CD4-positive, alpha-beta memory T cell (primary cell): ENCODE measurements at regions of chr17 and their contacts with region 1.

Region 1: DNA sequence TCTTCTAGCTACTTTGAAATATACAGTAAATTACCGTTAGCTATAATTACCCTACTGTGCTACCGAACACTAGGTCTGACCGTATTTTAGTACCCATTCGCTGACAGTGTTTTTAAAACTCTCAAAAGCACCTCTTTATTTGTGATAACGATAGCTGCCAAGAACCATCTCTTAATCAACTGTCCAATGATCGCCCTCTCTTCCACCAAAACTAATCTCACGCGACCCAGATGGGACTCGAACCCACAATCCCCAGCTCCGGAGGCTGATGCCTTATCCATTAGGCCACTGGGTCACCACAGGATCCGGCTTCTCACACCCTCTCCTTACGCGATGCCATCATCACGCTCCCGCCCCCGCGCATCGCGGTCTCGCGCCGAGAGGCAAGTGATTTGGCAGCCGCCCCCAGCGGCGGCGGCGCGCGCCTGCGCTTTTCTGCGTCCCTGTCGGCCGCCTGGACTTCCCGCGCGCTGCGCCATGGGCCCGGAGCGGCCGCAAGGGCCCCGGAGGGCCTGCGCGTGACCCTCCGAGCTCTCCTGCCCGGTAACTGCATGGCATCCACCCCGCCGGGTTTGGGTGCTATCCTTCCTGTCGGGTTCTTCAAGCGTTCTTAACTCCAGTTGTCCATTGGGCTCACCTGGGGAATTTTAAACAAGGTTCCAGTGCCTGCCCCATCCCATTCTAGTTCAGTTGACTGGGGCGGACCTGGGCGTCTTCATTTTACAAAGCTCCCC is 15.7 kb upstream of the KPNA2 start:
- DNase-seq: peak; percentile 93 to 98 (median 95)
- H3K4me3 ChIP-seq: peak overlapping the region; percentile 54 to 65
- H3K4me3 Mint-ChIP-seq: peak overlapping the region; percentile 84 to 94 (median 90)
- H3K27ac ChIP-seq: peak overlapping the region; percentile 62
- H3K27ac Mint-ChIP-seq: peak overlapping the region; percentile 91 to 100 (median 98)
- H3K4me1 ChIP-seq: peaks cover 15% of the 10 kb centered on the region
- H3K4me1 Mint-ChIP-seq: peaks cover 8 to 26% (median 21%) of the 10 kb centered on the region in 4 donors
- H3K27me3 ChIP-seq: no peaks in the 10 kb centered on the region
- H3K27me3 Mint-ChIP-seq: peaks cover 0 to 4% of the 10 kb centered on the region in 2 donors

Region 2: GRCh38 chr17:67824735-67825626 is 194.9 kb before region 1 on chr17 and contains the start of gene BPTF:
- CTCF ChIA-PET with region 1: no interaction called
- POLR2A ChIA-PET with region 1: no interaction called
- intact Hi-C with region 1: no loop called
- DNase-seq: peak; percentile 89 to 90 (median 90)
- H3K4me3 ChIP-seq: peak within 1 kb of the TSS; percentile 52 to 75
- H3K4me3 Mint-ChIP-seq: peak within 1 kb of the TSS; percentile 91 to 100 (median 95)
- H3K27ac ChIP-seq: peak within 1 kb of the TSS; percentile 46
- H3K27ac Mint-ChIP-seq: peak within 1 kb of the TSS; percentile 96 to 99 (median 98)
- H3K4me1 ChIP-seq: peaks cover 38% of the 10 kb centered on the region
- H3K4me1 Mint-ChIP-seq: peaks cover 18 to 45% (median 30%) of the 10 kb centered on the region in 4 donors
- H3K27me3 ChIP-seq: no peaks in the 10 kb centered on the region
- H3K27me3 Mint-ChIP-seq: peaks cover 0 to 3% of the 10 kb centered on the region in 2 donors
- total RNA-seq, gene BPTF: 182 to 187 TPM

Region 3: DNA sequence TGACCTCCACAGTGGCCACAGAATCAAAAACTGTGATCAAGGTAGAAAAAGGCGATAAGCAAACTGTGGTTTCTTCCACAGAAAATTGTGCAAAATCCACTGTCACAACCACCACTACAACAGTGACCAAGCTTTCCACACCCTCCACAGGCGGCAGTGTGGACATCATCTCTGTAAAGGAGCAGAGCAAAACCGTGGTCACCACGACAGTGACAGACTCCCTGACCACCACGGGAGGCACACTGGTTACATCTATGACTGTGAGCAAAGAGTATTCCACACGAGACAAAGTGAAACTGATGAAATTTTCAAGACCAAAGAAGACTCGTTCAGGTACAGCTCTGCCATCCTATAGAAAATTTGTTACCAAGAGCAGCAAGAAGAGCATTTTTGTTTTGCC is 107.2 kb before region 1 on chr17:
- CTCF ChIA-PET with region 1: no interaction called
- POLR2A ChIA-PET with region 1: no interaction called
- intact Hi-C with region 1: no loop called
- DNase-seq: no peak
- H3K4me3 ChIP-seq: no peak overlapping the region
- H3K4me3 Mint-ChIP-seq: no peak overlapping the region
- H3K27ac ChIP-seq: no peak overlapping the region
- H3K27ac Mint-ChIP-seq: peak overlapping the region in 3 of 7 donors; percentile 48 to 82 (median 57)
- H3K4me1 ChIP-seq: no peaks in the 10 kb centered on the region
- H3K4me1 Mint-ChIP-seq: peaks cover 13 to 32% (median 22%) of the 10 kb centered on the region in 4 donors
- H3K27me3 ChIP-seq: no peaks in the 10 kb centered on the region
- H3K27me3 Mint-ChIP-seq: no peaks in the 10 kb centered on the region

Region 4: DNA sequence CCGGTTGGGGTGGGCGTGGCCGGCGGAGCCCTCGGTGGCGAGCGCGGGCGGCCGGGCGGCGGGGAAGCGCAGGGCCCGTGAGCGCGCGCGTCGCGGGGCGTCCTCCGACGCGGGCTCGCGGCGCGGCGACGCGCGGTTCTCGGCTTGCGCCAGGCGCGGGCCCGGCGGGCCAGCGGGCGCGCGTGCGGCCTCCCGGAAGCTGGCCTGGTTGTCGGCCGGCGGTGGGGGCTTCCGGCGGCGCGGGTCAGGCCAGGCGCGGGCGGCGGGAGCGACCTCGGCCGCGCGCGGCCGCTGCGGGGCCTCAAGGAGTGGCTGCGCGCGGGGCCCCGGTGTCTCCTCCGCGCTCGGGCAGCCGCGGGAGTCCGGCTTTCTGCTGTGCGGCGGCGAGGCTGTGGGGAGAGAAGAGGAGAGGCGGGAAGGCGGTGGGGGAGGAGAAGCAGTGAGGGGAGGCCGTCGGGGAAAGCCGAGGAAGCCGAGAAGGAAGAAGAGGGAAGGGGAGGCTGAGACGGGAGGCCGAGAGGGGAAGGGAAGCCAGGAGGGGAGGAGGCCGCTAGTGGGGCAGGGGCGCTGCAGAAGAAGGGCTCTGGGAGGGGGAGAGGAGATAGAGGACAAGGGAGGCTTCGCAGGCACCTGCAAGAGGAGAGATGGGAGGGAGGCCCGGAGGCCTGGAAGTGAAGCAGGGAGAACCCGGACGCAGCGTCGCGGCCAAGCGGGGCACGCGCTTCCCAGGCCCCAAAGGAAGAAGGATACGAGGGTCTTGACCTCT is 26.1 kb before region 1 on chr17:
- CTCF ChIA-PET with region 1: interaction called, 4 read pairs
- POLR2A ChIA-PET with region 1: interaction called, 8 read pairs
- intact Hi-C with region 1: loop called (anchors 2 kb)
- DNase-seq: peak in 4 of 5 donors; percentile 10 to 74 (median 58)
- H3K4me3 ChIP-seq: peak overlapping the region in 1 of 2 donors; percentile 52
- H3K4me3 Mint-ChIP-seq: peak overlapping the region; percentile 78 to 94 (median 88)
- H3K27ac ChIP-seq: no peak overlapping the region
- H3K27ac Mint-ChIP-seq: peak overlapping the region in 6 of 7 donors; percentile 12 to 84 (median 64)
- H3K4me1 ChIP-seq: peaks cover 34% of the 10 kb centered on the region
- H3K4me1 Mint-ChIP-seq: peaks cover 19 to 39% (median 26%) of the 10 kb centered on the region in 4 donors
- H3K27me3 ChIP-seq: peaks cover 13% of the 10 kb centered on the region
- H3K27me3 Mint-ChIP-seq: peaks cover 9 to 12% of the 10 kb centered on the region in 2 donors

Region 5: GRCh38 chr17:68035523-68036303 is 15.9 kb after region 1 on chr17 and contains the start of gene KPNA2:
- CTCF ChIA-PET with region 1: interaction called, 6 read pairs
- POLR2A ChIA-PET with region 1: interaction called, 20 read pairs
- intact Hi-C with region 1: loop called (anchors 1 kb)
- DNase-seq: peak; percentile 92 to 96 (median 94)
- H3K4me3 ChIP-seq: peak within 1 kb of the TSS; percentile 43 to 91
- H3K4me3 Mint-ChIP-seq: peak within 1 kb of the TSS; percentile 87 to 98 (median 96)
- H3K27ac ChIP-seq: peak within 1 kb of the TSS; percentile 85
- H3K27ac Mint-ChIP-seq: peak within 1 kb of the TSS; percentile 89 to 98 (median 95)
- H3K4me1 ChIP-seq: peaks cover 19% of the 10 kb centered on the region
- H3K4me1 Mint-ChIP-seq: peaks cover 8 to 24% (median 13%) of the 10 kb centered on the region in 4 donors
- H3K27me3 ChIP-seq: no peaks in the 10 kb centered on the region
- H3K27me3 Mint-ChIP-seq: no peaks in the 10 kb centered on the region
- total RNA-seq, gene KPNA2: 12.6 to 14.7 TPM